ENCODE measurements at regions of chr14 and their contacts with region 1.

Region 1: GRCh38 chr14:81464247-81465002 is 64.3 kb upstream of the STON2 start:
- DNase-seq: peak in 32 of 35 experiments; percentile 16 to 87 (median 40)
- ATAC-seq: peak; percentile 82
- H3K4me3 ChIP-seq: peak overlapping the region; percentile 62 to 82
- H3K4me3 Mint-ChIP-seq: peak overlapping the region; percentile 79 to 83 (median 80)
- H3K27ac ChIP-seq: peak overlapping the region; percentile 71
- H3K27ac Mint-ChIP-seq: peak overlapping the region; percentile 90 to 92
- H3K4me1 ChIP-seq: no peaks in the 10 kb centered on the region
- H3K4me1 Mint-ChIP-seq: peaks cover 0 to 8% (median 6%) of the 10 kb centered on the region in 3 donors
- H3K27me3 ChIP-seq: no peaks in the 10 kb centered on the region
- H3K27me3 Mint-ChIP-seq: peaks cover 0 to 1% of the 10 kb centered on the region in 2 donors

Region 2: DNA sequence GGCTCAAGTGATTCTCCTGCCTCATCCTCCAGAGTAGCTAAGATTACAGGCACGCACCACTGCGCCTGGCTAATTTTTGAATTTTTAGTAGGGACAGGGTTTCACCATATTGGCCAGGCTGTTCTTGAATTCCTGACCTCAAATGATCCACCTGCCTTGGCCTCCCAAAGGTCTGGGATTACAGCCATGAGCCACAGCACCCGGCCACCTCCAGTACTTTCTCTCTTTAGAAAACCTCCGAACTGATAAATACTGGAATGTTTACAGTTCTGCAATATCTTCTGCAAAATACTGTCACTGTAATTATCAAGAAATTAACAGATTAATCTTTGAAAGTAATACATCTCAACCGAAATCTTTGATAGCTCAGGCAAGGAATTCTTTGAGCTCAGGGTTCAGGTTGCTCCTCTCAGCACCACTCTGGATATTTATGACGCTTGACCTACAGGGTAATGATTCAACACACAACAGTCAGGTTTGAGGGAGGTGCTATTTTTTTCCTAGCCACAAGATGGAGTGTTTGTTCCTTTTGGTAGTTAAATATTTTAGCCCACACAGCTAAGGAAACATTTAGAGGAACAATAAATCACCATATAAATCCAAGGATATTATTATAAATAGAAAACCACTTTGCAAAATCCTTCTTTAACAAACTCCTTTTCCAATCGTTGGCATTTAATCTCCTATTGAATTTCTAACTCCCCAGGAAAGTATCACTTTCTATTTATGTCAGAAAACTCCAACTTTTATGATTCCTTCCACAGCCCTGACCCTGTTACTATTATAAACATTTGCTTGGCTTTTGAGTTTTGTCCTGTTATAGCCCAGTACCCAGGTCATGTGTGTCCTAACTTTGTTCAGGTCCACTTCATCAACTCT is 195.1 kb before region 1 on chr14:
- CTCF ChIA-PET with region 1: interaction called, 11 to 21 read pairs
- POLR2A ChIA-PET with region 1: no interaction called
- DNase-seq: peak in 1 of 35 experiments; percentile 59
- ATAC-seq: peak; percentile 37 to 67 (median 48)
- H3K4me3 ChIP-seq: no peak overlapping the region
- H3K4me3 Mint-ChIP-seq: no peak overlapping the region
- H3K27ac ChIP-seq: no peak overlapping the region
- H3K27ac Mint-ChIP-seq: no peak overlapping the region
- H3K4me1 ChIP-seq: peaks cover 0 to 14% of the 10 kb centered on the region in 2 experiments
- H3K4me1 Mint-ChIP-seq: peaks cover 0 to 6% (median 4%) of the 10 kb centered on the region in 3 donors
- H3K27me3 ChIP-seq: peaks cover 0 to 4% of the 10 kb centered on the region in 2 experiments
- H3K27me3 Mint-ChIP-seq: peaks cover 10 to 17% of the 10 kb centered on the region in 2 donors

Region 3: DNA sequence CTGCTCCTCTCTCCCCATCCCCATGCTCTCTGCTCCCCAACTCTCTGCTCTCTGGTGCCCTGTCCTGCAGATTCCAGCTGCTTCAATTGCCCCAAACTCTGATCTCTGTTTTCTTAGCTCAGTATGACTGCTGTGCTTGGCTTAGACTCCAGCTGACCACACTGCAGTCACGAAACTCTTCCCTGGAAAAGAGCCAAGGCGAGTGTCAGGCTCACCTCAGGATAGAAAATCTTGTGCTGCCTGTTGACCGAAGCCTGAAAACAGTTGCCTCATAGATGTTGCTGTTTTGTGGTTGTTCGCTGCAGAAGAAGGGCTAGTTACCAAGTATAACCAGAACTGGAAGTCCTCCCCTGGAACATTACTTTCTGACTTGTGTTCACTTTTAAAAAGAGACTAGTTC is 57.6 kb before region 1 on chr14:
- CTCF ChIA-PET with region 1: no interaction called
- POLR2A ChIA-PET with region 1: no interaction called
- DNase-seq: no peak
- ATAC-seq: no peak
- H3K4me3 ChIP-seq: no peak overlapping the region
- H3K4me3 Mint-ChIP-seq: no peak overlapping the region
- H3K27ac ChIP-seq: no peak overlapping the region
- H3K27ac Mint-ChIP-seq: no peak overlapping the region
- H3K4me1 ChIP-seq: no peaks in the 10 kb centered on the region
- H3K4me1 Mint-ChIP-seq: no peaks in the 10 kb centered on the region
- H3K27me3 ChIP-seq: peaks cover 0 to 8% of the 10 kb centered on the region in 2 experiments
- H3K27me3 Mint-ChIP-seq: peaks cover 5 to 17% of the 10 kb centered on the region in 2 donors

Region 4: DNA sequence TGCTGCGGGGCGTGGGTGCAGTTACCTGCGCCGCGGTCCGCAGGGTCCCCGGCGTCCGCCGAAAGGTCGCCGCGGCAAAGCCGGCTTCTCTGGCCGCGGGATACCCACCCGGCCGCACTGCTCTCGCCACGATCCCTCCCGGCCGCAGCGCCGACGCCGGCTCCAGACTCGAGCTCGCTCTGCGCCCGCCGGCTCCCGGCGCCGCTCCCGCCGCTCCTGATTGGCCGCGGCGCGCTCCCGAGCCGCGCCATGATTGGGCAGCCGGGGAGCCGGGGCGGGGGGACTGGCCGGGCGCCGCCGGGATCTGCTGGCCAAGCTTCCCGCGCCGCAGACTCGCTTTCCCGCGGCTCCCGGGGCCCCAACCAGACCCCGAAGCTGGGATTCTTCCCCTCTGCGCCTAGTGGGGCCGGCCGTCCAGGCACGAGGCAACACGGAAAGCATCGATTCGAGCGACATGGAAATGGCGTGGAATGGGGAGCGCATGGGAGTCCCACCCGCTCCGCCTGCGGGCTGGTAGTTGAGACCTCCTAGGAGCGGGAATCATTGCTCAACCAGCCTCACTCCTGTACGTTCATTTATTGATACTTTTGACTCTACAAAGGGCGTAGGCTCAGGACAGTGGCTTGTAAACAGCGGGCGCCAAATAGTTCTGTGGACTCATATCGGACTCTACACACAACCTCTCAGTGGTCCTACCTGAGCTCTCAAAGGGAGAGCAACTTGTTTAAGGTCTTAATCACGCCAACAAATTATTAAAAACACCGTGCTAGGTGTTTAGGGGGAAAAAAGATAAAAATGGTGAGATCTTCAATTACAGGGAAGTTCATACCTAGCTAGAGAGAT is 27.9 kb before region 1 on chr14:
- CTCF ChIA-PET with region 1: no interaction called
- POLR2A ChIA-PET with region 1: no interaction called
- DNase-seq: peak in 16 of 35 experiments; percentile 1 to 39 (median 8)
- ATAC-seq: peak; percentile 72 to 86 (median 76)
- H3K4me3 ChIP-seq: peak overlapping the region; percentile 40 to 88
- H3K4me3 Mint-ChIP-seq: peak overlapping the region; percentile 66 to 91 (median 72)
- H3K27ac ChIP-seq: no peak overlapping the region
- H3K27ac Mint-ChIP-seq: no peak overlapping the region
- H3K4me1 ChIP-seq: peaks cover 9 to 14% of the 10 kb centered on the region in 2 experiments
- H3K4me1 Mint-ChIP-seq: peaks cover 15 to 17% (median 17%) of the 10 kb centered on the region in 3 donors
- H3K27me3 ChIP-seq: peaks cover 6 to 32% of the 10 kb centered on the region in 2 experiments
- H3K27me3 Mint-ChIP-seq: peaks cover 62 to 80% of the 10 kb centered on the region in 2 donors

Region 5: DNA sequence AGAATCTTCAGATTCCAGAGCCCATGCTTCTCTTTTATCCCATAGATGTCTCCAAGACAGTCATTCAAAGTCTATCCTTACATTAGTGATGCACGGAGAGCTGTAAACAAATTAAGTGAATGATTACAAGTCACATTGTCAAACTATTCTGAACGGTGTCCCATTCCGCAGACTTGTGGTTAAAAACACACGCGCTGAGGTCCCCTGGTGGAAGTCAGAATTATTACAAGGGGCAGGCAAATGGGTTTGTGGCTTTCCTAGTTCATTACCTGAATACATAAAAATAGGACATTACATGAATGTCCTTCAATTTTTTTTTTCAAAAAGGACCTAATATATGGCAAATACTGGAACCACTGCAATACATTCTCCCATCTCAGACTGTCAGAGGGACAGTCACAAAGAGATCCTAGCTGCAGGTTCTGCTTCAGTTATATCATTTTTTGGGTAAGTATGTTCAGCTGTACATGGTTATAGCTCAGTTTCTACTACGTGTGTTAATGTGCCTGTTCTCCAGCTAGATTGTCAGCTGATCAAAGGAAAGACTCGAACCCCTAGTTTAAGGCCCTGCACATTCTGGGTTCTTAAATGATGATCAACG is 11.2 kb before region 1 on chr14:
- CTCF ChIA-PET with region 1: interaction called, 8 to 12 read pairs
- POLR2A ChIA-PET with region 1: no interaction called
- DNase-seq: peak in 28 of 35 experiments; percentile 11 to 69 (median 31)
- ATAC-seq: peak; percentile 64 to 81 (median 75)
- H3K4me3 ChIP-seq: no peak overlapping the region
- H3K4me3 Mint-ChIP-seq: no peak overlapping the region
- H3K27ac ChIP-seq: no peak overlapping the region
- H3K27ac Mint-ChIP-seq: no peak overlapping the region
- H3K4me1 ChIP-seq: no peaks in the 10 kb centered on the region
- H3K4me1 Mint-ChIP-seq: peaks cover 6% of the 10 kb centered on the region in 3 donors
- H3K27me3 ChIP-seq: peaks cover 0 to 13% of the 10 kb centered on the region in 2 experiments
- H3K27me3 Mint-ChIP-seq: peaks cover 4 to 29% of the 10 kb centered on the region in 2 donors